ENCODE measurements at regions of chr9 and their contacts with region 1.

Region 1: DNA sequence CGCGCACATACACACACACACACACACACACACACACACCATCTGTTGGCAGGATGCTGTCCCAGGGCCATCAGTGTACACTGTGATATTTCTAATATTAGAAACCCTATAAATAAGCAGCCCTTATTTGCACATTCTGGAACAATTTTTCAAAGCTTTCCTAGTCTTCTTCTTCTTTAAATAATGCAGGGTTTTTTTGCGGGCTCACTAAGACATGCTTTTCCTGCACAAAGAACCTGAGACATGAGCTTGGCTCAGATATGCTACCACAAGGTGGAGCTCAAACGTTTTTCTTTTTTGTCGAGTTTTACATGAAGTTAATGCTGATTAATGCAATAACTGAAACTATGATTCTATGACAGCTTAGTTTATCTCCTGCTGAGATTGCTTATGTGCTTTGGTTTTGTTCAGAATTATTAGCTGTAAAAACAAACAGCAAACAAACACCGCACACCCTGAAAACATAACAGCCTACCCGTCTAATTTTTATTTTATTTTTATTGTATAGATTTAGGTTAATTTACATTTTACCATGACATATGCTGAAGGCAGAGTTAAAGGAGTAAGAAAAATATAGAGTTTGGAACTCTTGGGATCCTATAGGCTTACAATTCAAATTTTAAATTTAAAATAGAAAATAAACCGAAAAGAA is 95.8 kb downstream of the ALDH1A1 start:
- DNase-seq: peak; percentile 27
- H3K4me3 ChIP-seq: no peak overlapping the region
- H3K27ac ChIP-seq: no peak overlapping the region
- H3K4me1 ChIP-seq: no peaks in the 10 kb centered on the region
- H3K27me3 ChIP-seq: no peaks in the 10 kb centered on the region
- CTCF ChIP-seq: peak; percentile 10 to 63 (median 58)
- POLR2A ChIP-seq: no peak

Region 2: DNA sequence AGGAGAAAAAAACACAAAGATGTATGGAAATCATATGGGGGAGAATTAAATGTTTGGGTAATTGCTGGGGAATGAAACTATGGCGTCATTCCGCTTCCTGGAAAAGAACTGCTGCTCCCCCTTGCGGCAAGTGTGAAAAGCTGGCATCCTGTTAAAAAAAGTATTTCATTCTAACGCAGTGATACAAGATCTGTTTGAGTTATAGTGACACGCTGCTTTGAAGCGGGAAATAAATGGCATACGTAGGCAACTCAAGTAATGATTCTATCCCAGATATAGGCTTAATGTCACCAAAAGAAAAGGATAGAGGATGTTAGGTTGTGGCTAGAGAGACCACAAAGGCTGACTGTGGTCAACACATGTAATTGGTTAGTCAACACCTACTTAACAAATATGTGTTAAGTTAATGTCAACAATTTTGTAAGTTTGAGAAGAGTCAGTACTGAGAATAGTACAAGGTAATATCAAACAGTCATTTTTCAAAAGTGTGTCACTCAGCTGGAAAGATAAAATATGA is 166.0 kb after region 1 on chr9:
- intact Hi-C with region 1: loop called (anchors 5 kb)
- DNase-seq: peak; percentile 19
- H3K4me3 ChIP-seq: no peak overlapping the region
- H3K27ac ChIP-seq: no peak overlapping the region
- H3K4me1 ChIP-seq: no peaks in the 10 kb centered on the region
- H3K27me3 ChIP-seq: no peaks in the 10 kb centered on the region
- CTCF ChIP-seq: peak; percentile 63 to 78 (median 76)
- POLR2A ChIP-seq: no peak

Region 3: DNA sequence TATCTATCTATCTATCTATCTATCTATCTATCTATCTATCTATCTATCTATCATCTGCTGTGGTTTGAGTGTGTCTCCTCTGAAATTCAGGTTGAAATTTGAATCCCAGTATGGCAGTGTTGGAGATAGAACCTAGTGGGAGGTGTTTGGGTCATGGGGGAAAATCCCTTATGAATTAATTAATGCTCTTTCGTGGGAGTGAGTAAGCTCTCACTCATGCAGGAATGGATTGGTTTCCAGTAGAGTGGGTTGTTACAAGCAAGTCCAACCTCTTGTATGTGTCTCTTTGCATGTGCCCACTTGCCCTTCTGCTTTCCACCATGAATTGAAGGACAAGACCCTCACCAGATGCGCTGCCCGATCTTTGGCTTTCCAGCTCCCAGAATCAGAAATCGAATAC is 407.5 kb after region 1 on chr9:
- intact Hi-C with region 1: no loop called
- DNase-seq: no peak
- H3K4me3 ChIP-seq: no peak overlapping the region
- H3K27ac ChIP-seq: no peak overlapping the region
- H3K4me1 ChIP-seq: no peaks in the 10 kb centered on the region
- H3K27me3 ChIP-seq: no peaks in the 10 kb centered on the region
- CTCF ChIP-seq: no peak
- POLR2A ChIP-seq: no peak

Measured in prostate gland (tissue), 2 donors.